Calu3 (cell line): ENCODE measurements at regions of chr7 and their contacts with region 1.

Region 1: DNA sequence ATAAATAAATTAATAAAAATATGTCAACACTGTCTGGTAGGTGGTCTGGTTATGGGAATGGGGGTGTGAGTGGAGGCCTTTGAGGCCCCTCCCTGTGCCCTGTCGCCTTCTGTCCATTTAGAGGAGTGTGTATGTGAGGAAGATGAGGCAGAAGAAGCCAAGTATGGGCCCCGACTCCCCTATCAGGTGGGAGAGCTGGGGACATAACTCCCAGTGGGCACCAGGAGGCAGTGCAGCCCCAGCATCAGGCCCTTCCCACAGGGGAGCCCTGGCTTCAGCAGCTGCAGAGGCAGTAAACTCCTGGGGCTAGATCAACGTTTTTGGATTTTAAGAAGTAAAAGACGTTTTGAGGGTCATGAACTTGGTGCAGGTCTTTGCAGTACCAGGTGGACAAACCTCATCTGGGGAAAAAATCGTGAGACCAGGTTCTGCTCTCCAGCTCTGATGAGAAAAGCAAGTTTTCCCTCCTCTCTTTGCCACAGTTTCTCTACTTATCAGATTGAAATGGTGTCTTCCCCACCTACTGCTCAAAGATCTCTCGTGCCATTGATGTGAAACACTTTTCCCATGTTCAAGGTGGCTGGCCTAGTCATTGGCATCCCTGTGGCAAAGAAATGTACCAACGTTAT is 167.8 kb upstream of the EEPD1 start:
- DNase-seq: peak; percentile 94
- H3K4me3 Mint-ChIP-seq: no peak overlapping the region
- H3K27ac Mint-ChIP-seq: no peak overlapping the region
- H3K4me1 Mint-ChIP-seq: peaks cover 10% of the 10 kb centered on the region
- H3K27me3 Mint-ChIP-seq: no peaks in the 10 kb centered on the region
- CTCF ChIP-seq: peak; percentile 95

Region 2: DNA sequence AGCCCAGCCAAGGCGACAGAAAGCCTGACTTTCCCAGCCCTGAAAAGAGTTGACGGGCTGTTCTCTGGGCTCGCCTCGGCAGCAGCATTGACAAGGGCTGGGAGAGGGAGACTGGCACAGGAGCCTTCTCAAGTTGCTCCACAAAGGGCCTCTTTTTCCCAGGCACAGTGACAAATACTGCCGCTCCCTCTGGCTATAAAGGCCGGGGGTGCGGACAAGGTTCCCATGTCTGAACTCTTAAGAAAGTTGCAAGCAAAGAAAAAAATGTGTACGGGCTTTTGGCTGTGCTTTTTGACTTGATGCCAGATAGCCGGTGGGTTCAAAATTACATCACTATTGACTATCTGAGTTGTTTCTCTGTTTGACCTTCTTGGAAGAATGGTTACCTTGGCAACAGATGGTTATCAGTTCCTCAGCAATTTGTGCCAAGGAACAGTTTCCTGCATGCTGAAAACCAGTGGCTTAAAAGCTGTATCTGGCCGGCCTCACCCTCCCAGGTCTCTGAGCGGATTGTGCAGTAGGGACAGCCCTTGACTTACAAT is 52.0 kb after region 1 on chr7:
- CTCF ChIA-PET with region 1: no interaction called
- intact Hi-C with region 1: loop called (anchors 5 kb)
- DNase-seq: peak; percentile 86
- H3K4me3 Mint-ChIP-seq: no peak overlapping the region
- H3K27ac Mint-ChIP-seq: peak overlapping the region; percentile 16
- H3K4me1 Mint-ChIP-seq: peaks cover 54% of the 10 kb centered on the region
- H3K27me3 Mint-ChIP-seq: no peaks in the 10 kb centered on the region
- CTCF ChIP-seq: no peak

Region 3: DNA sequence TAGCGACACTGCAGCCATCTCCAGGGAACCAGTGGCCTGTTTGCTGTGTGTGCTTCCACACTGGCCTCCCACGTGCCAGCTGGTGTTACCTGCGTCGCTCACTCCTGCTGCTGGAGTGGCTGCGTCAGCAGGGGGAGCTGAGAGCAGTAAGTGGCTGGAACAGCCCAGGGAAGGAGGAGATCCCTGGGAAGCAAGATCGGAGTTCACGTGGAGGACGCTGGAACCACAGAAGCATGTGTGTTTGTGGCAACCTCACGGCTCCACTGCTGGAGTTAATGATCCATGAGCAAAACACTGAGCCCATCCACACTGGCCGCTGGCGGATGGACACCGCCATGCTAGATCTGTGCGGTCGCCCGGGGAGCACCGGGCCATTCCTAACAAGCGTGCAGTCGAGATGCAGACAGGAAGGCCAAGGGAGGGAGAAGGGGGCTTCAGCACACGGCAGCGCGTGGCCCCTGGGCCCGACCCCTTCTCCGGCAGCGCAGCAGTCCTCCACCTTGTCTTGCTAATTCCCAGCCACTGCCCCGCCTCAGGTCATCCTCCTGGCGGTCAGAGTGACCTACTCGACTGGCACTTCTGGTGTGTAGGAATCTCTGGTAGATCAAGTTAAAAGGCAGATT is 99.3 kb after region 1 on chr7:
- CTCF ChIA-PET with region 1: interaction called, 3 read pairs
- intact Hi-C with region 1: loop called (anchors 10 kb)
- DNase-seq: peak; percentile 83
- H3K4me3 Mint-ChIP-seq: no peak overlapping the region
- H3K27ac Mint-ChIP-seq: no peak overlapping the region
- H3K4me1 Mint-ChIP-seq: no peaks in the 10 kb centered on the region
- H3K27me3 Mint-ChIP-seq: no peaks in the 10 kb centered on the region
- CTCF ChIP-seq: peak; percentile 40

Region 4: DNA sequence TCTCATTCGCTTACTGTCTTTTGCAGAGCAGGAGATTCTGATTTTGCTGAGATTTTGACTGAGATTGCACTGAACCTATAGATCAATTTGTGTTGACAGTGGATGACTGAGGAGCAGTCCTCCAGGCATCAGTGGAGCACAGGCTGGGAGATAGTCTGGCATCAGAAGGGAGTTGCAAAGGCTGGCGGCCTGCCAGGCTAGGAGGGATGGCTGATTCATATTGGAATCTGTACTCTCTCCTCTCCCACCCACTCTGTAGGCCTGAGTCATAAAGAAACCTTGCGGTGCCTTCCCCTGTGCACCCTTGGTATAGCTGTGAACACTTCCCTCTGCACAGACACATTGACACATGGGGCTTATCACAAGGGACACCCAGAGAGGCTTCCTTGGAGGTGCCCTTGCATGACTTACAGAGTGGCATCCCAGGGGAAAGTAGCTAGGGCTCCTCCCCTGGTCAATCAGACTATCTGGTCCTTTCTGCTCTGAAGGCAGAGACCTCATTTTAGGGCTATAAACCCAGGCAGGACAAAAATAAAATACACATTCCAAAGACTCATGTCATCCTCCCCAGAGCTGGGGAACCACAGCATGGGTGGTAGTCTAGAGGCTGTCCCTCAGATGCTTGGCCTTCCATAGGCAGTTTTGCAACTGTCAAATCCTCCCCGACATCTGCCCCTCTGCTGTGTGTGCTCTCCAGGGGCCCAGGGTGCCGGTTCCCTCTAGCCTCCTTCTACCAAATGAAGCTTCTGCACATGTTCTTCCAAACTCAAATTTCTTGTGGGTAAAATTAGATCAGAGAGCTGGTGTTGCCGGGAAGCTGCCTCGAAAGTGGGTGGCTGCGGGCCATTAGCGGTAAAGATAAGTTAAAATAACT is 130.4 kb after region 1 on chr7:
- CTCF ChIA-PET with region 1: no interaction called
- intact Hi-C with region 1: loop called (anchors 10 kb)
- DNase-seq: peak; percentile 94
- H3K4me3 Mint-ChIP-seq: peak overlapping the region; percentile 57
- H3K27ac Mint-ChIP-seq: peak overlapping the region; percentile 93
- H3K4me1 Mint-ChIP-seq: peaks cover 60% of the 10 kb centered on the region
- H3K27me3 Mint-ChIP-seq: no peaks in the 10 kb centered on the region
- CTCF ChIP-seq: no peak

Region 5: DNA sequence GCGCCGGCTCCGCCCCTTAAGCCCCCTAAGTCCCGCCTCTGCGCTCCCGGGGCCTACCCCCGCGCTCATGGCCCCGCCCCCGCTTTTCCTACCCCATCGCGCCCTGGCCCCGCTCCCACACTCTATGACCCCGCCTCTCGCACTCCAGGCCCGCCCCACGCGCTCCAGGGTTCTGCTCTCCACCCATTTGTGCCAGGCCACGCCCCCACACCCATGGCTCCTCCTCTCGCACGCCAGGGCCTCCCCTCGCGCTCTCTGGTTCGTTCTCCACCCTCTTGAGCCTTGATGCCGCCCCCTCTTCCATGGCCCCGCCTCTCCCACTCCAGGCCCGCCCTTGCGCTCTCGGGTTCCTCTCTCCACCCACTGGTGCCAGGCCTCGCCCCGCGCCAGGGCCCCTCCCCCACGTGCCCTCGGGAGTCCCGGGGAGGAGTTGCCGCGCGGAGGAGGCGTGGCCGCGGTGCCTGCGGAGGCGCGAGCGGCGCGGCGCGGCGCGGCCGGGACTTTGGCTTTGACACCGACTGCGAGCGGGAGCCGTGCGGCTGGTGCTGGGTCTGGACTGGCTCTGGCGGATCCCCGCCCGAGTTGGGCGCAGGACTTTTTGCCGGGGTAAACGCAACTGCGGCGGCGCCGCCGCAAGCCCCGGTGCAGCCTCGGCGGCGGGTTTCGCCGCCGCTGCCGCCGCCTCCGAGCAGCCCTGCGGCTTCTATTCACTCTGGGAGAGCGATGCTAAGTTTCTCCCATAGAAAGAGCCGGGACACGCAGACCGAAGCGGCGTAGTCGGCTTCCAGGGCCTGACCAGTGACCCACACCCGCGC is 167.7 kb after region 1 on chr7 and contains the start of gene EEPD1:
- CTCF ChIA-PET with region 1: interaction called, 3 read pairs
- intact Hi-C with region 1: loop called (anchors 5 kb)
- DNase-seq: peak; percentile 100
- H3K4me3 Mint-ChIP-seq: peak within 1 kb of the TSS; percentile 93
- H3K27ac Mint-ChIP-seq: peak within 1 kb of the TSS; percentile 74
- H3K4me1 Mint-ChIP-seq: peaks cover 57% of the 10 kb centered on the region
- H3K27me3 Mint-ChIP-seq: no peaks in the 10 kb centered on the region
- CTCF ChIP-seq: peak; percentile 11
- total RNA-seq, gene EEPD1: 48.8 and 55.5 TPM in 2 replicates

Region 6: GRCh38 chr7:36318116-36318515 is 332.9 kb after region 1 on chr7:
- CTCF ChIA-PET with region 1: interaction called, 30 read pairs
- intact Hi-C with region 1: loop called (anchors 1 kb)
- DNase-seq: no peak
- H3K4me3 Mint-ChIP-seq: no peak overlapping the region
- H3K27ac Mint-ChIP-seq: no peak overlapping the region
- H3K4me1 Mint-ChIP-seq: peaks cover 11% of the 10 kb centered on the region
- H3K27me3 Mint-ChIP-seq: no peaks in the 10 kb centered on the region
- CTCF ChIP-seq: no peak